Body of pancreas (tissue), 4 donors: ENCODE measurements at regions of chr11 and their contacts with region 1.

Region 1: DNA sequence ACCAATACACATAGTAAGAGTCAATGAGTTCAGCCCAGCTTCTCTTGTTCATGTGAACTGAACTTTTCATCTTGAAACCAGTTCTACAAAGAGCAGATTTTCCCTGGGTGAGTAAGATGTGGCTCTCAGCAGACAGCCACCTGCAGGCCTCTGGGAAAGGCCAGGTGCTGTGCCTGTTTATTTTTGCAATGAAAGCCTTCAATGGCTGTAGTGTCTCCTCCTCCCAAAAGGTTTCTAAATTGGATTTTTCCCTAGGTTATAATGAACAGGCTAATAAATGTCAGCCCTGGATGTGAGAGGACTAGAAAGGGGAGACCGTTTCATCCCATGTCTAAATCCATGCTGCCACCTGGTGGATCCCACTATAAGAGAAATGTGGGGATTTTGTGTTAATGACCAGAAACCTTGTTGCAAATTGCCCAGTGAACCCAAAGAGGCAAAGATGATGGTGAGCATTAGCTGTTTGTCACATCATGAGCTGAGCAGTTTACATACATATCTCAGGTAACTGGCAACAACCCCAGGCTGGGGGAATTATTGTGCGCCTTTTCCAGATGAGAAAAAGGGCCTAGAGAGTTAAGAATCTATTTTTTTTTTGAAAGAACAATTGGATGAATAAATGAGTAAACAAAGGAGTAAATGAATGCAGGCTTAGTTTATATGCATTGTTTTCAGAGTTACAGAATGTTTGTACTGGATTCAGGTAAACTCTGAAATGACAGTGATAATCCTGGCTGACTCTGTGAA is 12.7 kb downstream of the C11orf91 start:
- DNase-seq: peak; percentile 52 to 64 (median 56)
- ATAC-seq: no peak
- H3K4me3 ChIP-seq: no peak overlapping the region
- H3K27ac ChIP-seq: no peak overlapping the region
- H3K4me1 ChIP-seq: peaks cover 35% of the 10 kb centered on the region
- H3K27me3 ChIP-seq: no peaks in the 10 kb centered on the region
- CTCF ChIP-seq: peak; percentile 30 to 71 (median 62)
- POLR2A ChIP-seq: no peak

Region 2: DNA sequence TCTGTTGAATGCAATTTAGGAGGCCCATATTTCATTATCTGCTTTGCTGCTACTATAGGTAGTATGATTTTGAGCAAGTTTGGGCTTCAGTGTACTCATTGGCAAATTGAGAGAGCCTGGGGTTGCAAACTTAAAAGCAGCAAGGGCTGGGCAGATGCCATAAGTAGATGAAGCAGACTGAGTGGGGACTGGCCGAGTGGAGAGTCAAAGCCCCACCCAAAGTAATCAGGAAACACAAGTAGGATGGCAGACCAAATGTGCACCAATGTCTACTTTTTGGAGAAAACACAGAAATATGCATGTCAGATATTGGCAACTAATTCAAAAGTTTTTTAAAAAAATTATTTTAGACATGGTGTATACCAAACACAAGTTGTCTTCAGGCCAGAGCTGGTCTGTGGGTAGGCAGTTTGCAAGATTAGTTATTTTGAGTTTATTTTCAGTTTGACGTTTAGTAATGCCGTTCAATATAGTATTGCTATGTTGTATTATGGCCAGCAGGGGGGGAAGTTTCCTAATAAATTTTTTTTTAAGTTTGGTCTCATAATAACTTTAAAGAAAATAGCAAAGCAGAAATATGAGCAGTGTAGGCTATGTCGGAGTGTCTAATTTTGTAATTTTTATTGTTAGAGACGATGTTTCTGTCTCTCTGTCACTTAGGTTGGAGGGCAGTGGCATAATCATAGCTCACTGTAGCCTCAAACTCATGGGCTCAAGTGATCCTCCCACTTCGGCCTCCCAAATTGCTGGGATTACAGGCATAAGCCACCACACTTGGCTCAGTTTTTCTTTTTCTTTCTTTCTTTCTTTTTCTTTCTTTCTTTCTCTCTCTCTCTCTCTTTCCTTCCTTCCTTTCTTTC is 325.6 kb before region 1 on chr11:
- intact Hi-C with region 1: loop called (anchors 10 kb)
- DNase-seq: no peak
- ATAC-seq: peak; percentile 72
- H3K4me3 ChIP-seq: no peak overlapping the region
- H3K27ac ChIP-seq: no peak overlapping the region
- H3K4me1 ChIP-seq: no peaks in the 10 kb centered on the region
- H3K27me3 ChIP-seq: no peaks in the 10 kb centered on the region
- CTCF ChIP-seq: peak; percentile 33 to 80 (median 74)
- POLR2A ChIP-seq: no peak

Region 3: GRCh38 chr11:33542921-33543320 is 145.0 kb before region 1 on chr11:
- intact Hi-C with region 1: loop called (anchors 5 kb)
- DNase-seq: peak; percentile 62 to 76 (median 66)
- ATAC-seq: peak; percentile 65
- H3K4me3 ChIP-seq: no peak overlapping the region
- H3K27ac ChIP-seq: no peak overlapping the region
- H3K4me1 ChIP-seq: no peaks in the 10 kb centered on the region
- H3K27me3 ChIP-seq: no peaks in the 10 kb centered on the region
- CTCF ChIP-seq: peak; percentile 30 to 76 (median 67)
- POLR2A ChIP-seq: no peak

Region 4: GRCh38 chr11:33582636-33583325 is 105.1 kb before region 1 on chr11:
- intact Hi-C with region 1: no loop called
- DNase-seq: no peak
- ATAC-seq: no peak
- H3K4me3 ChIP-seq: no peak overlapping the region
- H3K27ac ChIP-seq: no peak overlapping the region
- H3K4me1 ChIP-seq: no peaks in the 10 kb centered on the region
- H3K27me3 ChIP-seq: no peaks in the 10 kb centered on the region
- CTCF ChIP-seq: no peak
- POLR2A ChIP-seq: no peak